GM18951 (cell line): ENCODE measurements at regions of chr12 and their contacts with region 1.

Region 1: DNA sequence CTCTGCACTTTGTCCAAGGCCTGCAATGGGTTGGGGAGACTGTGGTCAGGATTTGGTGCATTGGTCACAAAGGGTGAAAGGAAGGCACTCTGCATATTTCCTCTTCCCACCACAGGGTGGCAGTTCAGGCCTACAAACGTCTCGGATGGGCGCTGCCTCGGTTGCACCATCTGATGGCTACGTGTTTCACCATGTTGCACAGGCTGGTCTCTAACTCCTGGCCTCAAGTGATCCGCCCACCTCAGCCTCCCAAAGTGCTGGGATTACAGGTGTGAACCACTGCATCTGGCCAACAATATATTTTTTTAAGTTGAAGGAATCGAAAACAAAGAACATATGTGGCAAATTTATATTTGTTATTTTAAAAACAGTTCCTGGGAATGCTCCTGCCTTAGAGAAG is 35.1 kb downstream of the TMBIM6 start:
- POLR2A ChIP-seq: no peak

Region 2: DNA sequence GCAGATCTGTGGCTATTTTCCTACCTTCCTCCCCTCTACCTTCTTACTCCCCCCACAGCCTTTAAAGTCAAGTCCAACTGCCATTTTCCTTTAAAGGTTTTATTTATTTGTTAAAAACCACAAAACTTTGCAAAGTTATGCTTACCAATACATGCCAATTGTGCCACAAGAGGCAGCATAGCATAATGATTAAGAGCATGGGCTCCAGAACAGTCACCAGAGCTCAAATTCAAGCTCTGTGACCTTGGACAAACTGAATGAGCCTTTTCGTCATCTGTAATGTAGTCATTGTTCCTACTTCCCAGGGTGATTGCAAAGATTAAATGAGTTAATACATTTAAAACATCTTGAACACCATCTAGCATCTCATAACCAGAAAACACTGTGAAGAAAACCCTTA is 56.2 kb before region 1 on chr12:
- in situ Hi-C with region 1: no loop called
- POLR2A ChIP-seq: no peak

Region 3: GRCh38 chr12:49838973-49839633 is 62.7 kb after region 1 on chr12:
- in situ Hi-C with region 1: loop called (anchors 5 kb)
- POLR2A ChIP-seq: no peak